CD8-positive, alpha-beta T cell (primary cell): ENCODE measurements at regions of chr1 and their contacts with region 1.

Region 1: GRCh38 chr1:45803301-45803780 is at the start of gene MAST2:
- DNase-seq: peak; percentile 65 to 91 (median 81)
- ATAC-seq: peak; percentile 95
- H3K4me3 ChIP-seq: peak within 1 kb of the TSS; percentile 40 to 47
- H3K4me3 Mint-ChIP-seq: peak within 1 kb of the TSS; percentile 85
- H3K27ac ChIP-seq: peak within 1 kb of the TSS in 1 of 2 experiments; percentile 46
- H3K27ac Mint-ChIP-seq: peak within 1 kb of the TSS; percentile 28
- H3K4me1 ChIP-seq: peaks cover 15% of the 10 kb centered on the region
- H3K4me1 Mint-ChIP-seq: peaks cover 16% of the 10 kb centered on the region
- H3K27me3 ChIP-seq: no peaks in the 10 kb centered on the region
- H3K27me3 Mint-ChIP-seq: no peaks in the 10 kb centered on the region
- CTCF ChIP-seq: no peak
- total RNA-seq, gene MAST2: 6.2 to 7.1 TPM

Region 2: DNA sequence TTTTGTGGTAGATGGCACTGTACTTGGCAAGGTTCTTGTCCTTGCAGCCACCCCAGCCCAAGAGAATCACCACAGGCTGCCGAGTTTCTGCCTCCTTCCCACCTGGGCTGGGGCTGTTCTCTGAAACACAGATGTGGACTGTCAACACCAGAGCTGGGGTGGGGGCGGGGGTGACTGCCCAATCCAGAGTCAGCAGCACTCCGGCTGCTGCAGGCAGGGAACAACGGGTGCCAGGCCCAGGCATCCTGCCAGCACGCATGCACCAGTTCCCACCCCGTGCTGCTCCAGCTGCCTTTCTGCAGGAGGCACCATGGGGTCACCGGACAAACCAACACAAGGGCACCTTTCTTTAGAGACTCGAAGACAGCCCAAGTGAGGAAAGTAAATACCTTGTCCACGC is 1143.2 kb before region 1 on chr1:
- CTCF ChIA-PET with region 1: no interaction called
- POLR2A ChIA-PET with region 1: no interaction called
- intact Hi-C with region 1: no loop called
- DNase-seq: no peak
- ATAC-seq: no peak
- H3K4me3 ChIP-seq: no peak overlapping the region
- H3K4me3 Mint-ChIP-seq: no peak overlapping the region
- H3K27ac ChIP-seq: no peak overlapping the region
- H3K27ac Mint-ChIP-seq: no peak overlapping the region
- H3K4me1 ChIP-seq: peaks cover 11% of the 10 kb centered on the region
- H3K4me1 Mint-ChIP-seq: peaks cover 12% of the 10 kb centered on the region
- H3K27me3 ChIP-seq: no peaks in the 10 kb centered on the region
- H3K27me3 Mint-ChIP-seq: no peaks in the 10 kb centered on the region
- CTCF ChIP-seq: no peak

Region 3: DNA sequence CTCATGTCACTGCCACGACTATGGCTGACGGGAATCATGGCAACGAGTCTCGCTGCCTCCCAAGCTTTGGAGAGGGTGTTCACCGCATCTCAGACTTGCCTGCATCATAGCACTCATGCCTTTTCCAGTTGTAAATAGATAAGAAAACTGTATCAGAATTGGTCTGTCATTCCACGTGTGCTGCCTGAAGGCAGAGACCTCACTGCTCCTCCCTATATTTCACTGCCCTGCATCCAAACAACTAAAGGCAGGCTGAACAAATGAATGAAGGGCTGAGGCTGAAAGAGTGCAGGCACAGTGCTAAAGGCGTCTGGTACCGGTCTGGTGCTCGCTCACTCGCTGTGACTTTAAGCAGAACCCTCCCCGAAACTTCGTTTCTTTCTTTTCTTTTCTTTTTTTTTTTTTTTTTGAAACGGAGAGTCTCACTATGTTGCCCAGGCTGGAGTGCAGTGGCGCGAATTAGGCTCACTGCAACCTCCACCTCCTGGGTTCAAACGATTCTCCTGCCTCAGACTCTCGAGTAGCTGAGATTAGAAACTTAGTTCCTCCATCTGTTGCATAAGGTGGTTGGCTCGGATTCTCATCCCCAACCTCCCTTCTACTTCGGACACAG is 817.5 kb before region 1 on chr1:
- CTCF ChIA-PET with region 1: no interaction called
- POLR2A ChIA-PET with region 1: no interaction called
- intact Hi-C with region 1: loop called in 1 of 2 experiments (anchors 10 kb)
- DNase-seq: no peak
- ATAC-seq: no peak
- H3K4me3 ChIP-seq: peak overlapping the region; percentile 70 to 85
- H3K4me3 Mint-ChIP-seq: peak overlapping the region; percentile 97
- H3K27ac ChIP-seq: peak overlapping the region; percentile 31 to 42
- H3K27ac Mint-ChIP-seq: peak overlapping the region; percentile 93
- H3K4me1 ChIP-seq: peaks cover 15% of the 10 kb centered on the region
- H3K4me1 Mint-ChIP-seq: peaks cover 30% of the 10 kb centered on the region
- H3K27me3 ChIP-seq: no peaks in the 10 kb centered on the region
- H3K27me3 Mint-ChIP-seq: no peaks in the 10 kb centered on the region
- CTCF ChIP-seq: no peak

Region 4: DNA sequence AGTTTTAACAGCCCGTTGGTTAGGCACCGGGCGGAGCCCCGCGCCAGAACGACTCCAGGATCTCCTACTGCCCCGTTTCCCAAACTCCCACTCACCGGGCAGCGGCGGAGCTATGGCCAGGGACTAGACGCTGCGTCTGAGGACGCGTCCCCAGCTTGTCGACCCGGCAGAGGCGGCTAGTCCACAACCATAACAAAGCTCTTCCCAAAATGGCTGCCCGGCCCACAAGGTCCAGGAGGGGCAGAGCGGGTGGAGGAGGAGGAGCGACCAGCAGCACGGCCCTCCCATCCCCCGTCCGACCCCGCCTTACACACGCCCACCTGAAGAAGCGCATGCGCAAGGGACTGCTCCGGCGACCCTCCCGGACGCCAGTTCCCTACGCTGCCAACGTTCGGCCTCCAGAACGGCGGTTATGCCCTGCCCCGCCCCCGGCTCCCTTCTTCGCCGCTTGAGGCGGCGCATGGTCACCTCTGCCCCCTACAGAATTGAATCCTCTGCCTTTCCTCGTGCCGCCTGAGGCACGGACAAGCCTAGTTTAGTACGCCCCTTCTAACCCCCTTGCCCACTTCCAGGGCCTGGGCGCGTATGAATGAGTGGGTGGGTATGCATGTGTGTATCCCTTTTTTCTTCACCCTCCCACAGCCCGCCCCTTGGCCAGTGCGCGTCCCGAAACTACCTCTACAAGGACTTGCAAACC is 116.9 kb before region 1 on chr1 and contains the start of gene GPBP1L1:
- CTCF ChIA-PET with region 1: no interaction called
- POLR2A ChIA-PET with region 1: no interaction called
- intact Hi-C with region 1: loop called in 1 of 2 experiments (anchors 2 kb)
- DNase-seq: peak; percentile 95 to 98 (median 98)
- ATAC-seq: peak; percentile 72
- H3K4me3 ChIP-seq: peak within 1 kb of the TSS; percentile 99
- H3K4me3 Mint-ChIP-seq: peak within 1 kb of the TSS; percentile 97
- H3K27ac ChIP-seq: peak within 1 kb of the TSS; percentile 84 to 92
- H3K27ac Mint-ChIP-seq: peak within 1 kb of the TSS; percentile 100
- H3K4me1 ChIP-seq: peaks cover 39% of the 10 kb centered on the region
- H3K4me1 Mint-ChIP-seq: peaks cover 59% of the 10 kb centered on the region
- H3K27me3 ChIP-seq: no peaks in the 10 kb centered on the region
- H3K27me3 Mint-ChIP-seq: no peaks in the 10 kb centered on the region
- CTCF ChIP-seq: no peak
- total RNA-seq, gene GPBP1L1: 125 to 128 TPM

Region 5: DNA sequence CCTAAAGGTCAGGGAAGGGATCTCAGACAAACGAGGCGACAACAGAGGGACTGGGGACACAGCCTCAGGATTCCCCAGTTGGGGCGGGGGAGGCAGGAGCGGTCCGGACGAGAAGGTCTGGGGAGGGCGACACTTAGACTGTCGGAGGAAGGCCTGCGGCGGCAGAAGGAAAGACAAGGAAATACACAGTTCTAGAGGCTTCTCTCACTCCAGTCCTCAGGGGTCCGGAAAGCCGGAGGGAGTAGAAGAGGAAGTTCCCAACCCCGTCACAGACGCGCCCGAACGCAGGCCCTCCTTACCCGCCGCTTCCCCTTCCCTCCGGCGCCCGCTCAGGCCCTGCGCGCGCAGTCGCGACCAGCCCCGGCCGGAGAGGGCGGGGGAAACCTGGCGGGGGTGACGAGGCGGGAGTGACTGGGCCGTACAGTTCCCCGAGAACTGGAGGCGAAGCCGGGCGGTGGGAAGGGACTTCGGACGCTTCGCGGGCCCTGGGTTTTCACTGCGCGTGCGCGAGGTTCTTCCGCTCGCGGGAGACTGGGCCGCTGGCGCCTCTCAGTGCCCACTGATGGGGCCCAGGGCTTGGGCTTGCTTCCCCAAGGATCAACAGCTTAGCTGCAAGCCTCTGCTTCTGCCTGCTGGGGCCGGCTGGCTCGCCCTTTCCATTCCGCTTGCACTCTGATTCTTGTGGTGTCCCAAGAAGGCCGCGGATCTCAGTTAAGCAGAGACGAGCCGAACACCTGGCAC is 52.9 kb before region 1 on chr1 and contains the start of gene IPP:
- CTCF ChIA-PET with region 1: no interaction called
- POLR2A ChIA-PET with region 1: no interaction called
- intact Hi-C with region 1: loop called (anchors 2 to 5 kb)
- DNase-seq: peak; percentile 73 to 97 (median 90)
- ATAC-seq: peak; percentile 90
- H3K4me3 ChIP-seq: peak within 1 kb of the TSS; percentile 82 to 90
- H3K4me3 Mint-ChIP-seq: peak within 1 kb of the TSS; percentile 97
- H3K27ac ChIP-seq: peak within 1 kb of the TSS; percentile 83 to 99
- H3K27ac Mint-ChIP-seq: peak within 1 kb of the TSS; percentile 100
- H3K4me1 ChIP-seq: peaks cover 17% of the 10 kb centered on the region
- H3K4me1 Mint-ChIP-seq: peaks cover 41% of the 10 kb centered on the region
- H3K27me3 ChIP-seq: no peaks in the 10 kb centered on the region
- H3K27me3 Mint-ChIP-seq: no peaks in the 10 kb centered on the region
- CTCF ChIP-seq: no peak
- total RNA-seq, gene IPP: 4.9 to 5.6 TPM

Region 6: GRCh38 chr1:45892068-45892785 is 88.9 kb after region 1 on chr1:
- CTCF ChIA-PET with region 1: no interaction called
- POLR2A ChIA-PET with region 1: no interaction called
- intact Hi-C with region 1: no loop called
- DNase-seq: no peak
- ATAC-seq: no peak
- H3K4me3 ChIP-seq: no peak overlapping the region
- H3K4me3 Mint-ChIP-seq: no peak overlapping the region
- H3K27ac ChIP-seq: no peak overlapping the region
- H3K27ac Mint-ChIP-seq: no peak overlapping the region
- H3K4me1 ChIP-seq: no peaks in the 10 kb centered on the region
- H3K4me1 Mint-ChIP-seq: no peaks in the 10 kb centered on the region
- H3K27me3 ChIP-seq: no peaks in the 10 kb centered on the region
- H3K27me3 Mint-ChIP-seq: no peaks in the 10 kb centered on the region
- CTCF ChIP-seq: no peak

Region 7: DNA sequence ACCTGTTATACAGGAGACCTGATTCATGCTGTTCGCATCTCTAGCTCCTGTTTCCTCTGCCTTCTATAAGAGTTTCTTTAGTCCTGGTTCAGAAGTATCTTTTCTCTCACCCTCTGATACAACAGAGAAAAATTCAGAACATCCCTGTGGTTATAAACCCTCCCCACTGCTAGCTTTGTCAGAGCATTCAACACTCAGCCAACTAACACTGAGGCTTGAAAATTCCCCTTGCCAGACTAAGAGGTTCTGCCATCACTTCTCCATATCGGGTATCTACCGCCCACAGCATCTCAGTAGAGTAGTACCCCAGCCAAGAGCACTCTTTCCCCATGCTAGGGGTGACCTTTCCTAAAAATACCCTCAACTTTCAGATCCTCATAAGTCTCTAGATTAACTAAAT is 348.7 kb after region 1 on chr1:
- CTCF ChIA-PET with region 1: no interaction called
- POLR2A ChIA-PET with region 1: no interaction called
- intact Hi-C with region 1: no loop called
- DNase-seq: no peak
- ATAC-seq: no peak
- H3K4me3 ChIP-seq: no peak overlapping the region
- H3K4me3 Mint-ChIP-seq: no peak overlapping the region
- H3K27ac ChIP-seq: no peak overlapping the region
- H3K27ac Mint-ChIP-seq: no peak overlapping the region
- H3K4me1 ChIP-seq: no peaks in the 10 kb centered on the region
- H3K4me1 Mint-ChIP-seq: no peaks in the 10 kb centered on the region
- H3K27me3 ChIP-seq: no peaks in the 10 kb centered on the region
- H3K27me3 Mint-ChIP-seq: no peaks in the 10 kb centered on the region
- CTCF ChIP-seq: no peak